ENCODE measurements at regions of chr6 and their contacts with region 1.

Region 1: GRCh38 chr6:26322645-26323482 is 42.1 kb upstream of the BTN3A2 start:
- DNase-seq: peak in 1 of 2 donors; percentile 29
- H3K4me3 ChIP-seq: peak overlapping the region in 2 of 3 donors; percentile 18 to 21
- H3K27ac ChIP-seq: no peak overlapping the region
- H3K4me1 ChIP-seq: no peaks in the 10 kb centered on the region
- H3K27me3 ChIP-seq: peaks cover 21% of the 10 kb centered on the region
- CTCF ChIP-seq: no peak
- POLR2A ChIP-seq: no peak

Region 2: GRCh38 chr6:26514984-26515383 is 192.1 kb after region 1 on chr6:
- intact Hi-C with region 1: no loop called
- DNase-seq: no peak
- H3K4me3 ChIP-seq: no peak overlapping the region
- H3K27ac ChIP-seq: no peak overlapping the region
- H3K4me1 ChIP-seq: no peaks in the 10 kb centered on the region
- H3K27me3 ChIP-seq: no peaks in the 10 kb centered on the region
- CTCF ChIP-seq: no peak
- POLR2A ChIP-seq: no peak

Region 3: GRCh38 chr6:26568601-26569432 is 246.0 kb after region 1 on chr6:
- intact Hi-C with region 1: loop called (anchors 10 kb)
- DNase-seq: peak; percentile 90 to 95
- H3K4me3 ChIP-seq: peak overlapping the region in 2 of 3 donors; percentile 33 to 49
- H3K27ac ChIP-seq: peak overlapping the region in 2 of 3 donors; percentile 11 to 73
- H3K4me1 ChIP-seq: no peaks in the 10 kb centered on the region
- H3K27me3 ChIP-seq: no peaks in the 10 kb centered on the region
- CTCF ChIP-seq: no peak
- POLR2A ChIP-seq: no peak